ENCODE measurements at regions of chr15 and their contacts with region 1.

Region 1: GRCh38 chr15:67779549-67780111 is 45.7 kb upstream of the SKOR1 start:
- DNase-seq: no peak
- ATAC-seq: no peak
- H3K4me3 ChIP-seq: no peak overlapping the region
- H3K27ac ChIP-seq: no peak overlapping the region
- H3K4me1 ChIP-seq: peaks cover 0 to 3% (median 0%) of the 10 kb centered on the region in 12 donors
- H3K27me3 ChIP-seq: no peaks in the 10 kb centered on the region
- CTCF ChIP-seq: no peak
- POLR2A ChIP-seq: no peak

Region 2: GRCh38 chr15:67819636-67820035 is 40.0 kb after region 1 on chr15:
- intact Hi-C with region 1: loop called in 1 of 10 experiments (anchors 2 kb)
- DNase-seq: no peak
- ATAC-seq: no peak
- H3K4me3 ChIP-seq: no peak overlapping the region
- H3K27ac ChIP-seq: no peak overlapping the region
- H3K4me1 ChIP-seq: peaks cover 0 to 36% (median 12%) of the 10 kb centered on the region in 12 donors
- H3K27me3 ChIP-seq: peaks cover 53 to 90% (median 71%) of the 10 kb centered on the region in 9 donors
- CTCF ChIP-seq: no peak
- POLR2A ChIP-seq: no peak